ENCODE measurements at regions of chr16 and their contacts with region 1.

Region 1: GRCh38 chr16:24036614-24037013 is 200.8 kb downstream of the PRKCB start:
- DNase-seq: peak; percentile 19
- H3K4me3 ChIP-seq: no peak overlapping the region
- H3K27ac ChIP-seq: no peak overlapping the region
- H3K4me1 ChIP-seq: no peaks in the 10 kb centered on the region
- H3K27me3 ChIP-seq: no peaks in the 10 kb centered on the region
- CTCF ChIP-seq: peak in 3 of 4 experiments; percentile 42 to 78 (median 67)
- POLR2A ChIP-seq: no peak

Region 2: GRCh38 chr16:23678430-23679273 is 358.0 kb before region 1 on chr16 and contains the start of gene PLK1:
- intact Hi-C with region 1: loop called (anchors 10 kb)
- DNase-seq: peak; percentile 68
- H3K4me3 ChIP-seq: peak within 1 kb of the TSS; percentile 37 to 44
- H3K27ac ChIP-seq: peak within 1 kb of the TSS in 1 of 2 donors; percentile 56
- H3K4me1 ChIP-seq: no peaks in the 10 kb centered on the region
- H3K27me3 ChIP-seq: no peaks in the 10 kb centered on the region
- CTCF ChIP-seq: peak in 3 of 4 experiments; percentile 10 to 53 (median 41)
- POLR2A ChIP-seq: no peak
- total RNA-seq, gene PLK1: 2.6 to 8.7 TPM

Region 3: GRCh38 chr16:23729503-23730424 is 306.9 kb before region 1 on chr16:
- intact Hi-C with region 1: loop called (anchors 10 kb)
- DNase-seq: no peak
- H3K4me3 ChIP-seq: no peak overlapping the region
- H3K27ac ChIP-seq: no peak overlapping the region
- H3K4me1 ChIP-seq: no peaks in the 10 kb centered on the region
- H3K27me3 ChIP-seq: no peaks in the 10 kb centered on the region
- CTCF ChIP-seq: no peak
- POLR2A ChIP-seq: no peak

Region 4: GRCh38 chr16:23803591-23804123 is 233.0 kb before region 1 on chr16:
- intact Hi-C with region 1: loop called (anchors 2 kb)
- DNase-seq: peak; percentile 46
- H3K4me3 ChIP-seq: no peak overlapping the region
- H3K27ac ChIP-seq: no peak overlapping the region
- H3K4me1 ChIP-seq: no peaks in the 10 kb centered on the region
- H3K27me3 ChIP-seq: no peaks in the 10 kb centered on the region
- CTCF ChIP-seq: peak in 3 of 4 experiments; percentile 26 to 59 (median 45)
- POLR2A ChIP-seq: no peak

Measured in prostate gland (tissue), 2 donors.